Transverse colon (tissue), 4 donors: ENCODE measurements at regions of chr11 and their contacts with region 1.

Region 1: DNA sequence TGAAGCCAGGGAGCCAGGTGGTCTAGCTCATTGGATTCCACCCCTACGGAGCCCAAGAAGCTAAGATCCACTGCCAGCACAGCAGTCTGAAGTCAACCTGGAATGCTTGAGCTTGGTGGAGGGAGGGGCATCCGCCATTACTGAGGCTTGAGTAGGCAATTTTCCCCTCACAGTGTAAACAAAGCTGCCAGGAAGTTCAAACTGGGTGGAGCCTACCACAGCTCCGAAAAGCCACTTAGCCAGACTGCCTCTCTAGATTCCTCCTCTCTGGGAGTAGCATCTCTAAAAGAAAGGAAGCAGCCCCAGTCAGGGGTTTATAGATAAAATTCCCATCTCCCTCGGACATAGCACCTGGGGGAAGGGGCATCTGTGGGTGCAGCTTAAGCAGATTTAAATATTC is 620.3 kb downstream of the NELL1 start:
- DNase-seq: no peak
- H3K4me3 ChIP-seq: no peak overlapping the region
- H3K27ac ChIP-seq: no peak overlapping the region
- H3K4me1 ChIP-seq: no peaks in the 10 kb centered on the region
- H3K27me3 ChIP-seq: no peaks in the 10 kb centered on the region
- CTCF ChIP-seq: no peak
- EP300 ChIP-seq: no peak
- POLR2A ChIP-seq: no peak

Region 2: GRCh38 chr11:20707876-20708275 is 581.8 kb before region 1 on chr11:
- in situ Hi-C with region 1: no loop called
- intact Hi-C with region 1: loop called (anchors 5 kb)
- DNase-seq: no peak
- H3K4me3 ChIP-seq: no peak overlapping the region
- H3K27ac ChIP-seq: no peak overlapping the region
- H3K4me1 ChIP-seq: no peaks in the 10 kb centered on the region
- H3K27me3 ChIP-seq: no peaks in the 10 kb centered on the region
- CTCF ChIP-seq: no peak
- EP300 ChIP-seq: no peak
- POLR2A ChIP-seq: no peak

Region 3: GRCh38 chr11:20873054-20873453 is 416.6 kb before region 1 on chr11:
- in situ Hi-C with region 1: no loop called
- intact Hi-C with region 1: no loop called
- DNase-seq: no peak
- H3K4me3 ChIP-seq: no peak overlapping the region
- H3K27ac ChIP-seq: no peak overlapping the region
- H3K4me1 ChIP-seq: no peaks in the 10 kb centered on the region
- H3K27me3 ChIP-seq: no peaks in the 10 kb centered on the region
- CTCF ChIP-seq: no peak
- EP300 ChIP-seq: no peak
- POLR2A ChIP-seq: no peak